ENCODE measurements at regions of chr9 and their contacts with region 1.

Region 1: DNA sequence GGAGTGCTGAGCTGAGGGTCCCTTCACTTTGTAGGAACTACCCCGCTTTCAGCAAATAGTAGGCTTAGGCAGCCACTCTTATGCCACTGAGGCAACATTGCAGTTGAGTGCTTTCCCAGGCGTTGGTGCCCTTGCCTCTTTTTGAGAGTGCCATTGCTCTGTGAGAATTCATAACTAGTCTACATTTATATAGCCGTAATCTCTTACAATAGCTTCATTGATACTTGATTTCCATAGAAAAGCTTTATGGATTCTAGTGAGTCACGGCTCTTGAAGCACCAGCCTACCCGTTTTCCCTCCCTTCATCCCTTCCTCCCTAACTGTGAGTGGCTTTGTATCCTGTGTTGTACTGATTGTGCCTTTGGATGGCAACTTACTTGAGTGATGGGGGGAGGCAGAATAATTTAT is 283.9 kb downstream of the AOPEP start:
- DNase-seq: peak; percentile 71
- H3K4me3 ChIP-seq: no peak overlapping the region
- H3K27ac ChIP-seq: peak overlapping the region; percentile 43
- H3K4me1 ChIP-seq: peaks cover 37% of the 10 kb centered on the region
- H3K27me3 ChIP-seq: no peaks in the 10 kb centered on the region
- CTCF ChIP-seq: no peak

Region 2: GRCh38 chr9:95061916-95062595 is 51.6 kb after region 1 on chr9:
- CTCF ChIA-PET with region 1: no interaction called
- dilution Hi-C with region 1: loop called (anchors 5 kb)
- in situ Hi-C with region 1: no loop called
- intact Hi-C with region 1: no loop called
- DNase-seq: no peak
- H3K4me3 ChIP-seq: no peak overlapping the region
- H3K27ac ChIP-seq: no peak overlapping the region
- H3K4me1 ChIP-seq: peaks cover 16% of the 10 kb centered on the region
- H3K27me3 ChIP-seq: no peaks in the 10 kb centered on the region
- CTCF ChIP-seq: no peak